Activated B cell treated with CpG ODN at 0.5 μM for 24 hours (primary cell): ENCODE measurements at regions of chr6 and their contacts with region 1.

Region 1: GRCh38 chr6:24991810-24992467 is 56.2 kb upstream of the RIPOR2 start:
- DNase-seq: peak; percentile 25
- ATAC-seq: peak; percentile 88
- H3K4me3 Mint-ChIP-seq: peak overlapping the region; percentile 55
- H3K27ac Mint-ChIP-seq: peak overlapping the region; percentile 74
- H3K4me1 Mint-ChIP-seq: peaks cover 83% of the 10 kb centered on the region
- H3K27me3 Mint-ChIP-seq: no peaks in the 10 kb centered on the region
- CTCF ChIP-seq: no peak

Region 2: DNA sequence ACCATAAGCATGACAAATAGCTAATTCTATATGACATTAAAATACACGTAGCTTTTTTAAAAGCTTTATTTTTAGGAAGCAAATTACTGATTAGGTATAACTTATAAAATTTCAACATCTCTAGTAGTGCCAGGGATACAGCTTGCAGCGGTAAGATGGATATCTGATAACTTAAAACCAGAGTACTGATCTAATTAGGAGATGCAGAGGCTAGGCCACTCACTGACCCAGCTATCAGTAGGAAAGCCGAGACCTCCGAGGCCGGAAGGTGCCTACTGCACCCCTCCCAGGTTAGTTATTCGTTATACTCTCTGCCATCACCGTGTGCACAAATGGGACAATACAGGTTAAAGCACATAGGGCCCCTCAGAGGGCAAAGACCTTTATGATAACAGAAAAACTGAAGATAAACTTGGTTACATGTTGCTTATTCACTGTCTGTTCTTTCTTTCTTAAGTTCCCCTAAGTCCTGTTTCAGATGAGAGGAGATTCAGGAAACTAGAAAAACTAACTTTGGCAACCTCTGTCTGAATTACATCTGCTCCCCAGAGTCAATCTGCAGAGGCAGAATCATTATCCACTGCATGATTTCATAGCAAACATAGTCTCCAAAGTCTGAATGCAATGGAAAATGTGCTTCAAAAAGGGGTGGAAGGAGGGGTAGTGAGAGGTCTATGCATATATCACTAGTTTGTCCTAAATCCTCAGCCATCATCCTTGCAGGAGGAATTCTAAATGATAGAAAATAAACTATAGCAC is 117.0 kb before region 1 on chr6:
- CTCF ChIA-PET with region 1: interaction called, 13 read pairs
- POLR2A ChIA-PET with region 1: interaction called, 3 read pairs
- intact Hi-C with region 1: no loop called
- DNase-seq: no peak
- ATAC-seq: no peak
- H3K4me3 Mint-ChIP-seq: no peak overlapping the region
- H3K27ac Mint-ChIP-seq: peak overlapping the region; percentile 77
- H3K4me1 Mint-ChIP-seq: peaks cover 42% of the 10 kb centered on the region
- H3K27me3 Mint-ChIP-seq: no peaks in the 10 kb centered on the region
- CTCF ChIP-seq: no peak

Region 3: GRCh38 chr6:24910961-24911712 is 80.8 kb before region 1 on chr6:
- CTCF ChIA-PET with region 1: interaction called, 62 read pairs
- POLR2A ChIA-PET with region 1: interaction called, 35 read pairs
- intact Hi-C with region 1: loop called (anchors 1 kb)
- DNase-seq: no peak
- ATAC-seq: peak; percentile 49
- H3K4me3 Mint-ChIP-seq: peak overlapping the region; percentile 91
- H3K27ac Mint-ChIP-seq: peak overlapping the region; percentile 95
- H3K4me1 Mint-ChIP-seq: peaks cover 98% of the 10 kb centered on the region
- H3K27me3 Mint-ChIP-seq: no peaks in the 10 kb centered on the region
- CTCF ChIP-seq: no peak

Region 4: DNA sequence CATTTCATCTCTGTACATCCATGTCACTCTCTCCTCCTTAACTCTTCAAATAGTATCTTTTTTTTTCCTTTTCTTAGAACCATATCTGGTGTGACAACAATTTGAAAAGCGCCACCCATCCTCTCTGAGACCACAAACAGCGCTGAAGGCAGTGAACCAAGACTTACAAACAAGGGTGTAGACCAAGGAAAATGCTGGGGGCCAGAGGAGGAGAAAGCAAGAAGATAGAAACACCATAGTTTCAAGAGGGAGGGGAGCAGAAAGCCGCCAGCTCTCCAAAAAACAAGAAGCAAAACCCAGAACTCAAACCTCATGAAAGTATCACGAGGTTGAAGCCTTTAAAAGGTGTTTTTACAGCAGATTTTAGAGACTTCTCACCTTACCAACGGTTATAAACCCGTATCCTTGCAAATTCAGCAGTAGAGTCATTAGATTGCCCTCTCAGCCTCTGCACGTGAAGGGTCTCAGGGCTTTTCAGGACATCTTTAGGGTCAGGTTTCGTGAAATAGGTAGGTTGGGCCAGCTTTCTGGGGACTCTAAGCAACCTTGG is 42.8 kb before region 1 on chr6:
- CTCF ChIA-PET with region 1: interaction called, 15 read pairs
- POLR2A ChIA-PET with region 1: interaction called, 19 read pairs
- intact Hi-C with region 1: no loop called
- DNase-seq: no peak
- ATAC-seq: peak; percentile 80
- H3K4me3 Mint-ChIP-seq: peak overlapping the region; percentile 65
- H3K27ac Mint-ChIP-seq: peak overlapping the region; percentile 94
- H3K4me1 Mint-ChIP-seq: peaks cover 85% of the 10 kb centered on the region
- H3K27me3 Mint-ChIP-seq: no peaks in the 10 kb centered on the region
- CTCF ChIP-seq: no peak

Region 5: DNA sequence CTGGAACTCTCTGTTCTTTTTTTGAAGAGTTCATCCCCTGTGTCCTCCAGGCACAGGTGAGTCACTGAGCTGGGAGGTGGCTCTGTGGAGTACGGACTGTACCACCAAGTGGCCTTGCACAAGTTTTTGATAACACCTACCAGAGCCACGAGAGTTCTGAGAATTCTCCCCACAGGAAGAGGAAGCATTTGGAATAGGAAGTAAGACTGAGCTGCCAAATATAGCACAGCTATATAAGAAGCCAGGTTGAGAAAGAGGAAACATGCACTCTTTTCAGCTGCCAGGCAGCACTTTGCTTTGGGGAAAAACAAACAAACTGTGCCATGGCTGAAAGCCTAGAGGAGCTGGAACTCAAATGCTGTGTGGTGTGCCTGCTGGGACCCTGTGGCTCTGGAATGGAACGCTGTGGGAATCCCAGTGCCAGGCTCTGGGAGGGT is 14.6 kb after region 1 on chr6:
- CTCF ChIA-PET with region 1: interaction called, 11 read pairs
- POLR2A ChIA-PET with region 1: no interaction called
- intact Hi-C with region 1: loop called (anchors 2 kb)
- DNase-seq: no peak
- ATAC-seq: peak; percentile 69
- H3K4me3 Mint-ChIP-seq: peak overlapping the region; percentile 46
- H3K27ac Mint-ChIP-seq: peak overlapping the region; percentile 83
- H3K4me1 Mint-ChIP-seq: peaks cover 78% of the 10 kb centered on the region
- H3K27me3 Mint-ChIP-seq: no peaks in the 10 kb centered on the region
- CTCF ChIP-seq: no peak

Region 6: DNA sequence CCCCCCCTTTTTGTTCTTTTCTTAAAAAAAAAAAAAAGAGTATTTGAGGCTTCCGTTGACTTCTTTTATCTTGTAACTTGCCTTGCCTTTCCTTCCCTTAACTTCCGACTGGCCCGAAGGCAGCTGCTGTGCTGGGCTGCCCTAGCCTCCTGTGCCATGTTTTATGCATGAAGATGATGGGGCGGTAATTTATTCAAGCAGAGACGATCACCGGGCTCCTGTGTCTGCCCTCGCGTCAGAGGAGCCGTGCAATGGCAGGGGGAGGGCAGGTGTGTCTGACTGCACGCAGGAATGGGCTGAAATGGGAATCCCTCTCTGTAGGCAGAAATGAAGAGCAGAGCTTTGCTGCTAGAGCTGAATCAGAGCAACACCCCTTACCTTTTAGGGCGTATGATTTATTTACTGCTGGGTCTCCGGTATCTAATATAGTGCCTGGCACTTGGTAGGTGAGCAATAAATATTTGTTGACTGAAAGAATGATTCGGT is 50.1 kb after region 1 on chr6:
- CTCF ChIA-PET with region 1: interaction called, 5 read pairs
- POLR2A ChIA-PET with region 1: no interaction called
- intact Hi-C with region 1: loop called (anchors 1 kb)
- DNase-seq: peak; percentile 53
- ATAC-seq: peak; percentile 65
- H3K4me3 Mint-ChIP-seq: peak overlapping the region; percentile 99
- H3K27ac Mint-ChIP-seq: peak overlapping the region; percentile 96
- H3K4me1 Mint-ChIP-seq: peaks cover 87% of the 10 kb centered on the region
- H3K27me3 Mint-ChIP-seq: no peaks in the 10 kb centered on the region
- CTCF ChIP-seq: no peak